ENCODE measurements at regions of chr5 and their contacts with region 1.

Region 1: DNA sequence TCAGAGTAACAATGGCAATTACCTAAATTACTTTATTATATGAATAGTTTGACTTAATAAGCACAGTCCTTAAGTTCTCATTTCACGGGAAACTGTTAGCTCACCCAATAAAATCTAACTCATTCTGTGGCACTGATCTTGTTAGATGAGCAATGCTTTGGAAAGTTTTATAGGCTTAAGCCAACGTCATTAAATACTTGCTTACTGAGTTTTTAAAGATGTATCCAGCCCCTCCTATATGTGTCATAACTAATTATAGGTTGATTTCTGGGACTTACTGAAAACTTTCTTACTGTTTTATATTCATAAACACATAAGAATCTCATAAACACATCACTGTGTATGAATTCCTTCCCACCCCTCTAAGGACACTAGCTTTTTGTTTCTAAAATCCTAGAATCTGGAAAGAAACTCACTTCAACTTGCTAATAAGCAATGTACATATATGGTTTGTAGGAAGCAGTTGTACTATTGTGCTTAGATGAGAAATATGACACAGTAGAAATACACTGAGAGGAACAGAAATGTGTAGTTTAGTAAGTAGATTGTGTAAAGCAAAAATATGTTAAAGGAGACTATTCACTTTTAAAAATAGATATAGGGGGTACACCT is 14.1 kb upstream of the MARCOL start:
- DNase-seq: peak; percentile 95
- ATAC-seq: peak; percentile 92
- H3K4me3 ChIP-seq: peak overlapping the region; percentile 4; the same call in 1 of the 2 replicates
- H3K27ac ChIP-seq: peak overlapping the region; percentile 91
- H3K4me1 ChIP-seq: peaks cover 19% of the 10 kb centered on the region
- H3K27me3 ChIP-seq: no peaks in the 10 kb centered on the region
- CTCF ChIP-seq: no peak

Region 2: GRCh38 chr5:148090773-148091221 is 133.4 kb before region 1 on chr5:
- CTCF ChIA-PET with region 1: no interaction called
- POLR2A ChIA-PET with region 1: no interaction called
- intact Hi-C with region 1: no loop called
- DNase-seq: peak; percentile 88
- ATAC-seq: peak; percentile 85
- H3K4me3 ChIP-seq: peak overlapping the region; percentile 47
- H3K27ac ChIP-seq: peak overlapping the region; percentile 11
- H3K4me1 ChIP-seq: peaks cover 22% of the 10 kb centered on the region
- H3K27me3 ChIP-seq: no peaks in the 10 kb centered on the region
- CTCF ChIP-seq: no peak

Region 3: DNA sequence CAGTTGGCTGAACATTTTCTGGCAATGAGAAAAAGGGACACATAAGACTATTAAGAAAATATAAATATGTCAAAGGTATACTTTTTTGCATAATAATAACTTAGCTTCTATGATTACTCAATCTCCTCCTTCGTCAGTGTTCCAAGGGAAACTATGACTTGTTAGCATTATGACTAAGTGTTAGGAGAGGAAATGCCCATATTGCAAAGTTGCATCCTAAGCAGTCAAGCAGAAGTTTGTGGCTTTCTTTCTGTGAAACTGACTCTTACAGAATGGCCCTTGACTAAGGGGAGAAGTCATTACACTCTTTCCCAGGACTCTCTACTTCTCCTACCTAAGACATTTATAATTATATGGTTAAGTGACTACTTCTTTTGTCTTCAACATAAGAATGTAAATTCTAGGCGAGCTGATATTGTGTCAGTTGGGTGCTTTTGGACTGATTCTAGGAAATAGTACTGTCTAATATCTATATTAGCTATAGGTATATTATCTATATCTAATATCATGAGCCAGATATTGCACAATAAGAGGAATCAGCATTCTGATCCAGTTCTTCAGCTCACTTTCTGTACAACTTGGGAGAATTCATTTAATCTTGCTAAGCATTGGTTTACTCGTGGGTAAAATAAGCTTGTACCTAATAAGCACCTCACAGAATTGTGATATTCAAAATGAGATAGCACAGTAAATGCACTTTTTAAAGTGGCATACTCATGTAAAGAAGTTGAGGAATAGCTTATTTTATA is 37.8 kb before region 1 on chr5:
- CTCF ChIA-PET with region 1: no interaction called
- POLR2A ChIA-PET with region 1: no interaction called
- intact Hi-C with region 1: loop called (anchors 1 kb)
- DNase-seq: peak; percentile 90
- ATAC-seq: peak; percentile 100
- H3K4me3 ChIP-seq: no peak overlapping the region
- H3K27ac ChIP-seq: peak overlapping the region; percentile 50
- H3K4me1 ChIP-seq: peaks cover 12% of the 10 kb centered on the region
- H3K27me3 ChIP-seq: no peaks in the 10 kb centered on the region
- CTCF ChIP-seq: no peak

Region 4: DNA sequence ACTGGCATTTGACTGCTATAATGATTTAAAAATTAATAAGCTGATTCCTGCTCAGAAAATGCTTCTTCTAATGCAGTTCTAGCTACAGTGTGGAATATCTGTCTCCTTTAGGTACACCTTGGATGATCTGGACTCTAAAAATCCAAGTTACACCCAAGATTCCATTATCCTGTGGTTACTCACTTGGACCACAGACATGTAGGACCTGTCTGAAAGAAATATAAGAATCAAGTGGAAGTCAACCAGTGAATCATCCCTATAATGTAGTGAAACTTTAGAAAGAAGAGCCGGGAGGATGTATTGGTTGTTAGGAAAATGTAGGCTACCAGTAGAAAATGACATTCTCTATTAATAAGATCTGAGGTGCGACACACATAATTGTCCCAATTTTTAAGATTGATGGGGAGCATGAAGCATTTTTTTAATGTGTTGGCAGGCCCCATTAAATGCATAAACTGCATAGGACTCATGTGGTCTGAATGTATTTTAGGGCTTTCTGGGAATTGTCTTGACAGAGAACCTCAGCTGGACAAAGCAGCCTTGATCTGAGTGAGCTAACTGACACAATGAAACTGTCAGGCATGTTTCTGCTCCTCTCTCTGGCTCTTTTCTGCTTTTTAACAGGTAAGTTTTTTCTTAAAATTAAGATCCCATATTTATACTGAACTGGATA is 21.6 kb before region 1 on chr5 and contains the start of gene SPINK6:
- CTCF ChIA-PET with region 1: no interaction called
- POLR2A ChIA-PET with region 1: interaction called, 21 read pairs
- intact Hi-C with region 1: no loop called
- DNase-seq: peak; percentile 91
- ATAC-seq: peak; percentile 100
- H3K4me3 ChIP-seq: no peak within 1 kb of the TSS
- H3K27ac ChIP-seq: no peak within 1 kb of the TSS
- H3K4me1 ChIP-seq: peaks cover 8% of the 10 kb centered on the region; the same call in 1 of the 2 replicates
- H3K27me3 ChIP-seq: no peaks in the 10 kb centered on the region
- CTCF ChIP-seq: no peak
- total RNA-seq, gene SPINK6: not detected in 2 replicates

Region 5: GRCh38 chr5:148268556-148268955 is 44.3 kb after region 1 on chr5 and contains the start of gene SPINK13:
- CTCF ChIA-PET with region 1: no interaction called
- POLR2A ChIA-PET with region 1: no interaction called
- intact Hi-C with region 1: loop called (anchors 5 kb)
- DNase-seq: peak; percentile 95
- ATAC-seq: peak; percentile 100
- H3K4me3 ChIP-seq: no peak within 1 kb of the TSS
- H3K27ac ChIP-seq: peak within 1 kb of the TSS; percentile 36
- H3K4me1 ChIP-seq: peaks cover 10% of the 10 kb centered on the region
- H3K27me3 ChIP-seq: no peaks in the 10 kb centered on the region
- CTCF ChIP-seq: no peak
- total RNA-seq, gene SPINK13: 3.0 TPM in 1 of 2 replicates, not detected in the other

Region 6: GRCh38 chr5:148290271-148291195 is 66.3 kb after region 1 on chr5:
- CTCF ChIA-PET with region 1: no interaction called
- POLR2A ChIA-PET with region 1: no interaction called
- intact Hi-C with region 1: loop called (anchors 5 kb)
- DNase-seq: peak; percentile 66
- ATAC-seq: peak; percentile 90
- H3K4me3 ChIP-seq: no peak overlapping the region
- H3K27ac ChIP-seq: no peak overlapping the region
- H3K4me1 ChIP-seq: no peaks in the 10 kb centered on the region
- H3K27me3 ChIP-seq: no peaks in the 10 kb centered on the region
- CTCF ChIP-seq: peak; percentile 92

Measured in PC-3 (cell line).